ENCODE measurements at regions of chr15 and their contacts with region 1.

Region 1: GRCh38 chr15:86488046-86488445 is 408.4 kb downstream of the AGBL1 start:
- DNase-seq: no peak

Region 2: GRCh38 chr15:85860394-85861161 is 627.5 kb before region 1 on chr15:
- CTCF ChIA-PET with region 1: interaction called, 12 read pairs
- POLR2A ChIA-PET with region 1: no interaction called
- DNase-seq: no peak

Region 3: DNA sequence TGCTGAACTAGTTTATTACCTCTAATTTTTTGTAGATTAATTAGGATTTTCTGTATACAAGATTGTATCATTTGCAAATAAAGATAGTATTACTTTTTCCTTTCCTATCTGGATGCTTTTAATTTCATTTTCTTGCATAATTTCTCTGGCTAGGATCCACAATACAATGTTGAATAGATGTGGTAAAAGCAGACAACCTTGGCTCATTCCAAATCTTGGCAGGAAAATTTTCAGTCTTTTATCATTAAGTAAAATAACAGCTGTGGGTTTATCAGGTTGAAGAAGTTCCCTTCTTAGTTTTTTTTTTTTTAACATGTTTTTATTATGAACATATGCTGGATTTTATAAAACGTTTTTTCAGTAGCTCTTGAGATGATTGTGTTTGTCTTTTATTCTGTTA is 14.3 kb after region 1 on chr15:
- CTCF ChIA-PET with region 1: no interaction called
- POLR2A ChIA-PET with region 1: no interaction called
- DNase-seq: no peak

Region 4: DNA sequence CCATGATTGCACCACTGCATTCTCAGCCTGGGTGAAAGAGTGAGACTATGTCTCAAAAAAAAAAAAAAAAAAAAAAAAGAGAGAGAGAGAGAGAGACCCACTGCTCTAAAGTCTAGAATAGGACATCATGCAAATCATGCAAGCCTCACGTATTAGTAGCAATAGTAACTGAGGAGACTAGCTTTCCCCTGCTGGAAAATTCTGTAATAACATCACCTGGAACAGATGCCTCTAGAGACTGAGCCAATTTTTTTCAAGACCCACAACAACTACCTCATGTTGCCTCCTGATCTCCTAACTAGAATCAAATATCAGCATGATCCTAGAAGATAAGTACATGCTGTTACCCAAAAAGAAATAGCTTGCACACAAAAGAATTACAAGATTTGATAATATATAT is 53.5 kb after region 1 on chr15:
- CTCF ChIA-PET with region 1: no interaction called
- POLR2A ChIA-PET with region 1: no interaction called
- DNase-seq: no peak

Region 5: GRCh38 chr15:86555939-86556338 is 67.9 kb after region 1 on chr15:
- CTCF ChIA-PET with region 1: interaction called, 5 read pairs
- POLR2A ChIA-PET with region 1: interaction called, 14 read pairs
- DNase-seq: peak; percentile 11